ENCODE measurements at regions of chr3 and their contacts with region 1.

Region 1: DNA sequence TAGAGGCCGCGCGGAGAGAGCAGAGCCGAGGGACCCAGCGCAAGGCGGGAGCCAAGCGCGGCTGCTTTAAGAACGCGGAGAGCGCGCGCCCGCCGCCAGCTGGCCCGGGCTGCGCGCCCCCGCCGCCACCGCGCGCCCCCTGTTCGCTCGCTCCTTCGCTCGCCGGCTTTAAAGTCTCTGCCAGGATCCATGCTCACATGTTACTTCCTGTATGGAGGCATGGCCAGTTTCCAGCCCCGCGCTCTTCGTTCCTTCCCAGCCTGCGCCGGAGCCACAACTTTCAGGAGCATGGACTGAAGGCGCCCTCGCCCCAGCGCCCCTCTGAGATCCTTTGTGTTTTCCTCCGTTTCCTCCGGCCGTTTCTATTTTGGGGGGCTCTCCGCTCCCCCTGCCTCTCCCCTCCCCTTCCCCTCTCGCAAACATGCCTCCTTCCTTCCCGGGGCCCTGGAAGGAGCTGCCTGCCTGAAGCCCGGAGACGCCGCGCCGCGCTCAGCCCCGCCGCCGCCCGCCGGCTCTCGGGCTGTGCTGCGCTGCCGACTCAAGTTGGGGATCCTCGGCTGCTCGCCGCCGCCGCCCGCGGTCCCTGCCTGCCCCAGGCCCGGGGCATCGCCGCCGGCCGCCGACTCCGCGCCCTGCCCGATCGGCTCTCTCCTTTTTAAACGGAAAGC is at the start of gene PTPRG:
- DNase-seq: peak; percentile 94
- ATAC-seq: peak; percentile 59
- H3K4me3 ChIP-seq: peak within 1 kb of the TSS; percentile 99
- H3K27ac ChIP-seq: peak within 1 kb of the TSS; percentile 94
- H3K4me1 ChIP-seq: peaks cover 2% of the 10 kb centered on the region; the same call in 1 of the 2 replicates
- H3K27me3 ChIP-seq: no peaks in the 10 kb centered on the region
- CTCF ChIP-seq: no peak
- POLR2A ChIP-seq: peak; percentile 73; the same call in 1 of the 2 replicates
- RAD21 ChIP-seq: no peak
- total RNA-seq, gene PTPRG: 24.7 and 31.0 TPM in 2 replicates

Region 2: DNA sequence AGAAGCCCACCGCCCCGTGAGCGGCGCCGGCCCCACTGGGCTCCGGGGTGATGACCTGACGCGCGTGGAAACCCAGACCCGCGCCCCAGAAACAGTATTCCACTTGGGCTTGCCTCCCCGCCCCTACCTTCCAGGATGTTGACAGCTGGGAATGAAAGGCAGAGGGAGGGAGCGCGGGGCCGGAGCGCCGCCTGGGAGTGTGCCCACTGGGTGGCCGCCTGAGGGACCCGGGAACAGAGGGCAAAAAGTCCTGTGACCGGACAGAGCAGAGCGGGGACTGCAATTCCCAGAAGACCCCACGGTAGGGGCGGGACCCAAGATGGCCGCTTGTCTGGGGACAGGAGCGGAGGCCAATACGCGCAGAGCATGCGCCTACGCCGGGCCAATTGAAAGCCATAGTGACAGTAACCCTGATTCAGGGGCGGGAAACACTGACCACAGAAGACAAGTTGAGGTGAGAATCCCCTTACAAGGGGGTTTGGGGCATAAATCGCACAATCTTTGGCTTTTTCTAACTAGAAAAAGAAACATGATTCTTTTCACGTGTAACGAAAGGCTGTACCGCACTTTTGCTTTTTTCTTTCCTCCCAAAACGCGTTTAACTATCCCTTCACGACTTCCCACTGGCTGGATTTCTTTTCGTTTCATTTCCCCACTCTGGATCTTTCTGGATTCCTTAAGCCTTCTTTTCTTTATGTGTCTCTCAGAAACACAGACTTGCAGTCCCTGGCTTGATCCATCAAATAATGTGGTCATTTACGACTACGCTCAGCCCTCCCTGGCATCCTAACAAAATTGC is 310.1 kb before region 1 on chr3 and contains the start of gene FHIT:
- CTCF ChIA-PET with region 1: no interaction called
- POLR2A ChIA-PET with region 1: no interaction called
- dilution Hi-C with region 1: no loop called
- in situ Hi-C with region 1: no loop called
- intact Hi-C with region 1: loop called (anchors 2 kb)
- DNase-seq: peak; percentile 87
- ATAC-seq: peak; percentile 100
- H3K4me3 ChIP-seq: peak within 1 kb of the TSS; percentile 62
- H3K27ac ChIP-seq: no peak within 1 kb of the TSS; the same call in 1 of the 2 replicates
- H3K4me1 ChIP-seq: no peaks in the 10 kb centered on the region
- H3K27me3 ChIP-seq: no peaks in the 10 kb centered on the region; the same call in 1 of the 2 replicates
- CTCF ChIP-seq: no peak
- POLR2A ChIP-seq: no peak
- RAD21 ChIP-seq: no peak
- total RNA-seq, gene FHIT: not detected in 2 replicates

Region 3: GRCh38 chr3:61725851-61726333 is 164.4 kb after region 1 on chr3:
- CTCF ChIA-PET with region 1: no interaction called
- POLR2A ChIA-PET with region 1: no interaction called
- dilution Hi-C with region 1: no loop called
- in situ Hi-C with region 1: no loop called
- intact Hi-C with region 1: loop called (anchors 5 kb)
- DNase-seq: peak; percentile 84
- ATAC-seq: peak; percentile 93
- H3K4me3 ChIP-seq: no peak overlapping the region
- H3K27ac ChIP-seq: no peak overlapping the region
- H3K4me1 ChIP-seq: peaks cover 5% of the 10 kb centered on the region
- H3K27me3 ChIP-seq: no peaks in the 10 kb centered on the region
- CTCF ChIP-seq: no peak
- POLR2A ChIP-seq: no peak
- RAD21 ChIP-seq: no peak

Region 4: DNA sequence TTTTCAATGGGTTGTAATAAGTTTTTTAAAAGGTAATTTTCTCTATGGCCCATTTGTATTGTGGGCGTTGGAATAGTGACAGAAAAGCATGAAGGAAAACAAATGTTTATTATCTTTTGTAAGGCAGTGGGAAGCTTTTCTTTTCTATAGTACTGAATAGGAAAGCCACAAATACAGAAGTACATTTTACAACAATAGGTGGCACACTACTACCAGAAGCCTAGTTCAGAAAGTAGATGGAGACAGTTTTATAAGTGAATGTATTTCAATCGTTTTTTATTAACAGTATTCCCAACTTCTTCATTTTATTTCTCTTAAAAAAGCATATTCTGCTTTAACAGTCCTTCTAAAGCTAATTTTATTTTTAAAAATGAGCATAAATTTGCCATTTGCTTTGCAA is 296.5 kb after region 1 on chr3:
- CTCF ChIA-PET with region 1: interaction called, 4 read pairs
- POLR2A ChIA-PET with region 1: no interaction called
- dilution Hi-C with region 1: no loop called
- in situ Hi-C with region 1: no loop called
- intact Hi-C with region 1: loop called (anchors 5 kb)
- DNase-seq: peak; percentile 56
- ATAC-seq: peak; percentile 66
- H3K4me3 ChIP-seq: no peak overlapping the region
- H3K27ac ChIP-seq: no peak overlapping the region
- H3K4me1 ChIP-seq: peaks cover 6% of the 10 kb centered on the region
- H3K27me3 ChIP-seq: no peaks in the 10 kb centered on the region
- CTCF ChIP-seq: peak; percentile 58
- POLR2A ChIP-seq: no peak
- RAD21 ChIP-seq: peak; percentile 63

Region 5: GRCh38 chr3:61956236-61956635 is 394.7 kb after region 1 on chr3:
- CTCF ChIA-PET with region 1: interaction called, 3 read pairs
- POLR2A ChIA-PET with region 1: no interaction called
- dilution Hi-C with region 1: no loop called
- in situ Hi-C with region 1: no loop called
- intact Hi-C with region 1: loop called (anchors 5 kb)
- DNase-seq: peak; percentile 74
- ATAC-seq: peak; percentile 82
- H3K4me3 ChIP-seq: no peak overlapping the region
- H3K27ac ChIP-seq: no peak overlapping the region; the same call in 1 of the 2 replicates
- H3K4me1 ChIP-seq: peaks cover 10% of the 10 kb centered on the region
- H3K27me3 ChIP-seq: no peaks in the 10 kb centered on the region
- CTCF ChIP-seq: no peak
- POLR2A ChIP-seq: no peak
- RAD21 ChIP-seq: no peak

Region 6: GRCh38 chr3:62131592-62131991 is 570.1 kb after region 1 on chr3:
- CTCF ChIA-PET with region 1: interaction called, 4 read pairs
- POLR2A ChIA-PET with region 1: no interaction called
- dilution Hi-C with region 1: no loop called
- in situ Hi-C with region 1: no loop called
- intact Hi-C with region 1: loop called (anchors 2 kb)
- DNase-seq: peak; percentile 11
- ATAC-seq: peak; percentile 37; the same call in 1 of the 2 replicates
- H3K4me3 ChIP-seq: no peak overlapping the region
- H3K27ac ChIP-seq: no peak overlapping the region
- H3K4me1 ChIP-seq: no peaks in the 10 kb centered on the region
- H3K27me3 ChIP-seq: no peaks in the 10 kb centered on the region
- CTCF ChIP-seq: peak; percentile 38
- POLR2A ChIP-seq: no peak
- RAD21 ChIP-seq: peak; percentile 47